ENCODE measurements at regions of chr11 and their contacts with region 1.

Region 1: GRCh38 chr11:95556342-95557163 is 233.0 kb downstream of the FAM76B start:
- DNase-seq: peak; percentile 66
- H3K4me3 Mint-ChIP-seq: no peak overlapping the region
- H3K27ac Mint-ChIP-seq: peak overlapping the region; percentile 83
- H3K4me1 Mint-ChIP-seq: peaks cover 22% of the 10 kb centered on the region
- H3K27me3 Mint-ChIP-seq: no peaks in the 10 kb centered on the region

Region 2: DNA sequence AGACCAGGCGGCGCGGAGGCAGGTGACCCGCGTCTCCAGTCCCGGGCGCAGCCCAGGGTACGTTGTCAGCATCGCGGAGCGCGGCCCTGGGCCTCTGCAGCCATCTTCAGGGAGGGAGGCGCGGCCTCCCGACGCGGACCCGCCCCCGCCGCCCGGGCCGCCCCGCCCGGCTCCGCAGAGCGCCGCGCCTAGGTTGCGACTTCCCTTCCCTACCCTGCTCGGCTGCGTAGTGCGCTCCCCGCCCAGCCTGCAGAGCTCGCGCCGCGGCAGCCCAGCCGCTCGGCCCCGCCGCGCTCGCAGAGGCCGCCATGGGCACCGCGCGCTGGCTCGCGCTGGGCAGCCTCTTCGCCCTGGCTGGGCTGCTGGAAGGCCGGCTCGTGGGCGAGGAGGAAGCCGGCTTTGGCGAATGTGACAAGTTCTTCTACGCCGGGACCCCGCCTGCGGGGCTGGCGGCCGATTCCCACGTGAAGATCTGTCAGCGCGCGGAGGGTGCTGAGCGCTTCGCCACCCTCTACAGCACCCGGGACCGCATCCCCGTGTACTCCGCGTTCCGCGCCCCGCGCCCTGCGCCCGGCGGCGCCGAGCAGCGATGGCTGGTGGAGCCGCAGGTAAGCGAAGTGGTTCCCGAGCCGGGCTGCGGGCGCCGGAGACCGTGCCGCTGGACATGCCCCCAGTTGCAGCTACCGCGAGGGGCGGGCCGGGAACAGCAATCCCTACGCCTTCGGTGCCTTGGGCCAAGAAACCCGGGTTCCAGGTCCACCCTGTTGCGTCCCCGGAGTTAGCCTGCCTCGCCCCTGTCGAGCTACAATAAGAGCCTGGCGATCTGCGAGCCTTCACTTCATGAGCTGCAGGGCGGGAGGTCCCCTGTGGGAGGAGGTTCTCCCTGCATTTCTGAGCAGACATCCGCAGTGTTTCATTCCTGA is 466.7 kb before region 1 on chr11 and contains the start of gene ENDOD1:
- CTCF ChIA-PET with region 1: no interaction called
- intact Hi-C with region 1: loop called (anchors 5 kb)
- DNase-seq: peak; percentile 82
- H3K4me3 Mint-ChIP-seq: peak within 1 kb of the TSS; percentile 86
- H3K27ac Mint-ChIP-seq: peak within 1 kb of the TSS; percentile 87
- H3K4me1 Mint-ChIP-seq: peaks cover 64% of the 10 kb centered on the region
- H3K27me3 Mint-ChIP-seq: no peaks in the 10 kb centered on the region
- total RNA-seq, gene ENDOD1: 14.5 to 15.2 TPM

Region 3: GRCh38 chr11:95544095-95544856 is 12.3 kb before region 1 on chr11:
- CTCF ChIA-PET with region 1: no interaction called
- intact Hi-C with region 1: loop called (anchors 1 kb)
- DNase-seq: no peak
- H3K4me3 Mint-ChIP-seq: no peak overlapping the region
- H3K27ac Mint-ChIP-seq: no peak overlapping the region
- H3K4me1 Mint-ChIP-seq: peaks cover 28% of the 10 kb centered on the region
- H3K27me3 Mint-ChIP-seq: no peaks in the 10 kb centered on the region

Region 4: DNA sequence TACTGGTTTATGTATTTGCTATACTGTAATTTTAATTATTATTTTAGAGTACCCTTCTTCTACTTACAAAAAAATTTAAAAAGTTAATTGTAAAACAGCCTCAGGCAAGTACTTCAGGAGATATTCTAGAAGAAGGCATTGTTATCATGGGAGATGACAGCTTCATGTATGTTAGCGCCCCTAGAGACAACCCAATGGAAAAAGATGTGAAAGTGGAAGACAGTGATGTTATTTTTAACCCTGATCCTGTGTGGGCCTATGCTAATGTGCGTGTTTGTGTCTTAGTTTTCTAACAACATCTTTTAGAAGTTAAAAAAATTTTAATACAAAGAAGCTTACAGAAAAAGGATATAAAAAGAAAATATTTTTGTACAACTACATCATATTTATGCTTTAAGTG is 28.0 kb after region 1 on chr11:
- CTCF ChIA-PET with region 1: no interaction called
- intact Hi-C with region 1: loop called (anchors 1 kb)
- DNase-seq: no peak
- H3K4me3 Mint-ChIP-seq: no peak overlapping the region
- H3K27ac Mint-ChIP-seq: no peak overlapping the region
- H3K4me1 Mint-ChIP-seq: peaks cover 18% of the 10 kb centered on the region
- H3K27me3 Mint-ChIP-seq: no peaks in the 10 kb centered on the region

Region 5: GRCh38 chr11:95680169-95680929 is 123.8 kb after region 1 on chr11:
- CTCF ChIA-PET with region 1: no interaction called
- intact Hi-C with region 1: loop called (anchors 1 kb)
- DNase-seq: no peak
- H3K4me3 Mint-ChIP-seq: peak overlapping the region; percentile 32
- H3K27ac Mint-ChIP-seq: peak overlapping the region; percentile 48
- H3K4me1 Mint-ChIP-seq: peaks cover 88% of the 10 kb centered on the region
- H3K27me3 Mint-ChIP-seq: no peaks in the 10 kb centered on the region

Region 6: GRCh38 chr11:95699631-95700470 is 143.3 kb after region 1 on chr11:
- CTCF ChIA-PET with region 1: interaction called, 14 read pairs
- intact Hi-C with region 1: loop called (anchors 1 kb)
- DNase-seq: no peak
- H3K4me3 Mint-ChIP-seq: peak overlapping the region; percentile 65
- H3K27ac Mint-ChIP-seq: peak overlapping the region; percentile 92
- H3K4me1 Mint-ChIP-seq: peaks cover 53% of the 10 kb centered on the region
- H3K27me3 Mint-ChIP-seq: no peaks in the 10 kb centered on the region

Region 7: DNA sequence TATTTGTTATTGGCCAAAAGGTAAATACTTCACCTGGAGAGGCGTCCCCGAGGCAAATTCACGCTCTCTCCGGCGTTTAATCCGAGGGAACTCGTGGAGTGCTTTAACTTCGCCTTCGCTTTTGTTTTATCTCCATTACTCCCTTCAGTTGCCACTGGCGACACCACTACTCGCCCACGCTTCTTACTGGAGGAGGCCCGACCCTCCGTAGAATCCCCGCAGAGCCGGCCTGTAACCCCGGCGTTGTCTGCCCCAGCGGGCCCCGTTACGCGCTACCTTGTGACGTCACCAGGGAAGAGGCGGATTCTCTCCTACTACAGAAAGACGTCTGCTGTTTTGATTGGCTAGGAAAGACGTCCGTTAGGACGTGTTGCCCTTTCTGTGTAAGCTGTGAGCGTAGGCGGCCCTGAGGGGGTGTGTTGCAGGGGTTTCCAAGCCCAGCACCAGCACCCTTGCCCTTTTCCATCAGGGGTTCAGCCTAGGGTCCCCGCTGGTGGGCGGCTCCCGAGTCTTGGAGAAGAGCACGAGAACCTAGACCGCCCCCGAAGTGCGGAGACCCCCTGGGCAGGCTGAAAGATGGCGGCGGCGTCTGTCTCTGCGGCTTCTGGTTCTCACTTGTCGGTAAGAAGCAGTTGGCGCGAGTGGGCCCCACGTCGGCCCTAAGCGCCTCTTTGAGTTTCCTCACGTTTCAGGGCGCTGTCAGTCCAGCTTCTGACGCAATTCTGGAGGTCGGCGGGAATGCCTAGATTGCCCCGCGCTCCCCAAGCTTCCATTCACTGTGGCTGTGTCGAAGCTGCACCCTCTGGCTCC is 233.8 kb after region 1 on chr11 and contains the start of gene CEP57:
- CTCF ChIA-PET with region 1: no interaction called
- intact Hi-C with region 1: loop called (anchors 1 kb)
- DNase-seq: peak; percentile 98
- H3K4me3 Mint-ChIP-seq: peak within 1 kb of the TSS; percentile 99
- H3K27ac Mint-ChIP-seq: peak within 1 kb of the TSS; percentile 100
- H3K4me1 Mint-ChIP-seq: peaks cover 56% of the 10 kb centered on the region
- H3K27me3 Mint-ChIP-seq: no peaks in the 10 kb centered on the region
- total RNA-seq, gene CEP57: 110 to 115 TPM

Measured in activated naive CD4-positive, alpha-beta T cell treated with anti-CD3 and anti-CD28 coated beads for 36 hours (primary cell).